ENCODE measurements at regions of chr7 and their contacts with region 1.

Region 1: DNA sequence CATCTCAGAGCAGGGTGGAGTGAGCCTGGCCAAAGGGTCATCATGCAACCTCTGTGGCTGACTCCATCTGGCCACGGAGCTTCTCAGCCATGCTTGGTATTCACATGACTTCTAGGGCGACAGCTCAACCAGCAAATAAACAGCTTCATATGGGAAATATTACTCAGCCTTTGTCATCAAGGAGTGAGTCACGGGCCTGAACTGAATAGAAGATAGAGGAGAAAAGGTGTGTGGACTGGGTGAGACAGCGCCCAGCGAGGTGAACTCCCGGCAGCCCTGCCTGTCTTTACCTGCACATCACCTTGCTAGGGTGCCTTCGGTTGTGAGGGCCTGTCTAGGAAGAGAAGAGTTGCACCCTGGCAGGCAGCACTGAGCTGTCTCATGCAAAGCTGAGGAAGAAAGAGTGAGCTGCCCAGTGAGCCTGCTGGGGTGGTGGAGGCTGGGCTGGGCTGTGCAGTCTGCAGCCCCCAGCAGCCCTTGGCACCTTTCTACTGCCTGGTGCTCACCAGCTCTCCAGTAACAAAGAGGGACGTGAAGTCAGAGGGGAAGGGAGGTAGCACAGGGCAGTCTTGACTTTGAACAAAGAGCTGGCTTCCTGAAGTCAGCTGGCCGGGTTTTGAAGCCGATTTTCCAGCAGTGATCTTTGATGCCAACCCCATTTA is 114.2 kb downstream of the EGFR start:
- DNase-seq: peak; percentile 63
- ATAC-seq: peak; percentile 82
- H3K4me3 Mint-ChIP-seq: no peak overlapping the region
- H3K27ac Mint-ChIP-seq: peak overlapping the region; percentile 72
- H3K4me1 Mint-ChIP-seq: peaks cover 38% of the 10 kb centered on the region
- H3K27me3 Mint-ChIP-seq: peaks cover 16% of the 10 kb centered on the region

Region 2: DNA sequence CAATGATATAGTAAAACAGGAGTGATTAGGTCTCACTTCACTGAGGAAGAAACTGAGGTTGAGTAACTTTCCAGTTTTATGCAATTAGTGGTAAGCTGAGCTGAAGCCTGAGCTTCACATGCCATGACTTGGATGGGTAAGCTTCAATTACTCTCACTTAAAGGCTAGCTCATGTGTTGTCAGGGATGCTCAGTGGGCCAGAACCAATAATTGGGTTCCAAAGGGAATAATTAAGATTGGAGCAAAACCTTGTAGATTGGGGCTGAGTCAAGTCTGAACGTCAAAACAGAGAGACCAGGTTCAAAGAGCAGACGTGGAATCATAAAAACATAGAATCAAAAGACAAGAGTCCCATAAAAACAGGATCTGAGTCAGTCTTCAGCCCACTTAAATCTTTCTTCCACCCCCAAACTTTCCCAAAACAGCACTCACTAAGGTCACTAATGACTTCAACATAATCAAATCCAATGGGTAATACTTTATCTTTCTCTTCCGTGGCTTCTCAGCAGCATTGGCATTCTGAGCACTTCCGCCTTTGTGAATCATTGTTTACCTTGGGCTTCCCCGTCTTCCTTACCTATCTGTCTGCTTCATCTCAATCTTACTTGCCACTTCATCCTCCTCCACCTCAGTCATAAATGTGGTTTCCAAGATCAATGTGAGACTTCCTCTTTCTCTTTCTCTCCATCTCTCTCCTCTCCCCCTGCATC is 137.2 kb before region 1 on chr7:
- CTCF ChIA-PET with region 1: no interaction called
- POLR2A ChIA-PET with region 1: interaction called, 3 read pairs
- intact Hi-C with region 1: loop called (anchors 2 to 5 kb)
- DNase-seq: peak; percentile 58
- ATAC-seq: peak; percentile 90
- H3K4me3 Mint-ChIP-seq: no peak overlapping the region
- H3K27ac Mint-ChIP-seq: peak overlapping the region; percentile 69
- H3K4me1 Mint-ChIP-seq: peaks cover 34% of the 10 kb centered on the region
- H3K27me3 Mint-ChIP-seq: peaks cover 22% of the 10 kb centered on the region

Region 3: GRCh38 chr7:55073945-55074499 is 59.0 kb before region 1 on chr7:
- CTCF ChIA-PET with region 1: no interaction called
- POLR2A ChIA-PET with region 1: no interaction called
- intact Hi-C with region 1: loop called in 1 of 2 experiments (anchors 2 kb)
- DNase-seq: peak; percentile 50
- ATAC-seq: peak; percentile 77
- H3K4me3 Mint-ChIP-seq: no peak overlapping the region
- H3K27ac Mint-ChIP-seq: peak overlapping the region; percentile 33
- H3K4me1 Mint-ChIP-seq: peaks cover 18% of the 10 kb centered on the region
- H3K27me3 Mint-ChIP-seq: peaks cover 8% of the 10 kb centered on the region

Region 4: DNA sequence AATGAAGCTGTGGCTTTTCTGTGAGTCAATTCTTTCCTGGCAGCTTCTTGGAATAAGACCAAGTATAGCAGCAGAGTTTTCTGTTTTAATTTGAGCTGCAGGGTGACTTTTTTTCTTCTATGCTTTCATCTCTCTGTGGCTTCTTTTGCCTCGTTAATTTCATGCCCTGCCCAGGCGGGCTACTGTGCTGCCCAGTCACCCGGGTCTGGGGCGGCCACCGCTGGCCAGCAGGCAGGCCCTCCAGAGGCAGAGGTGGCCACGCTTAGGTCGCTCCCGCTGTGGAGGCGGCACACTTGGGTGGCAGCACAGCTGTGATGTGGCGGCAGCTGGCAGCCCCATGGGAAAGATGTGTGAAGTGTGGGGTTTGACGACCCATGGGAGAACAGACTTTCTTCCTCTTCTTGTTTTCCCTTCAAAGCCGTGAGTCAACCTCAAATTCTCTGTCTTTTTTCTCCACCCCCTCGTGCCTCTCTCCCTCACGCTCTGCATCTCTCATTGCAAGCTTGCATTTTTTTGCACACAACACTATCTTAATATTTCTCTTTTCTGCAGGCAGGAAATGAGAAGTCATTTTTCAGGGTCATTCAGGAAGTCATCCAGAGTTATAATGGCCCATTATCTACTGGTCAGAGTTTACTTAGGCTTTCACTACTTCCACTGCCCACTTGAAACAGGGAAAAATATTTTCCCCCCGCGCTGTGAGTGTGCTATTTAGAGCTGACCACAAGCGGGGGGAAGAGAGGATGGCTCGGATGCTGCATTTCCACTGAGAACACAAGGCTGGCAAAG is 46.4 kb before region 1 on chr7:
- CTCF ChIA-PET with region 1: no interaction called
- POLR2A ChIA-PET with region 1: no interaction called
- intact Hi-C with region 1: loop called (anchors 2 to 5 kb)
- DNase-seq: peak; percentile 45
- ATAC-seq: peak; percentile 79
- H3K4me3 Mint-ChIP-seq: no peak overlapping the region
- H3K27ac Mint-ChIP-seq: peak overlapping the region; percentile 29
- H3K4me1 Mint-ChIP-seq: peaks cover 15% of the 10 kb centered on the region
- H3K27me3 Mint-ChIP-seq: peaks cover 24% of the 10 kb centered on the region

Region 5: DNA sequence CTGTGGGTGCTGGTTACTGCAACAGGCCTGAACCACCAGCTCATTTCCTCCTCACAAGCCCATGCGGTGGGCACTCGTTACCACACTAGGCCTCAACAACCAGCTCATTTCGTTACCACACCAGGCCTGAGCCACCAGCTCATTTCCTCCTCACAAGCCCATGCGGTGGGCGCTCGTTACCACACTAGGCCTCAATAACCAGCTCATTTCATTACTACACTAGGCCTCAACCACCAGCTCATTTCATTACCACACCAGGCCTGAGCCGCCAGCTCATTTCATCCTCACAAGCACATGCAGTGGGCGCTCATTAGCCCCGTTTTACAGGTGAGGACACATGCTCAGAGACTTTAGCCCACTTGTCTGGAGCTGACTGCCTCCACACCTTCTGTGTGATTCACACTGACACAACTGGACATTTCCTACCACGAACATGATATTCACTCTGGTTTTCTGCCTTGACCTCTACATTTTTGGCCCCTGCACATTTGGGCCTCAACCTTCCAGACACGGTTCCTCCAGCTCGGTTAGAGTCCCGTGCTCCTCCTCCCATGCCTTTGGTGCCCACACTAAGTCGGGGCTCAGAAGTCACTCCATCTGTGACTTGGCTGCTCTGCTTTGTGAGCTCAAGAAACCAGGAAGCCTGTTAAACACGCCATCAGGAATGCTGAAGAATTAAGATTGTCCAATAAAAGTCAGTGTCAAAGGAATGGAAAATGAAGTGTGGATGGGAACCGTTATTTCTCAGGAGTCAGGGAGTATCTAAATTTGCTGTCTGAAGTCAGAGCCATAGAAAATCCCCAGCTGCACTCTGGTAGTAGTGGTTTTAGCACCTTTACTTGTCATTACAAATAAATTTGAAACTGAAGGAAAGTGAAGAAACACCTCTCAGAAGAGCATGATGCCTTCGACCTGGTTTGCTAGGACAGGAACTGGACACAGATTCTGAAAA is 176.3 kb after region 1 on chr7:
- CTCF ChIA-PET with region 1: no interaction called
- POLR2A ChIA-PET with region 1: interaction called, 3 read pairs
- intact Hi-C with region 1: loop called in 1 of 2 experiments (anchors 5 kb)
- DNase-seq: peak; percentile 91
- ATAC-seq: peak; percentile 88
- H3K4me3 Mint-ChIP-seq: no peak overlapping the region
- H3K27ac Mint-ChIP-seq: peak overlapping the region; percentile 84
- H3K4me1 Mint-ChIP-seq: peaks cover 22% of the 10 kb centered on the region
- H3K27me3 Mint-ChIP-seq: peaks cover 12% of the 10 kb centered on the region

Region 6: GRCh38 chr7:55515569-55516279 is 382.7 kb after region 1 on chr7:
- CTCF ChIA-PET with region 1: no interaction called
- POLR2A ChIA-PET with region 1: no interaction called
- intact Hi-C with region 1: loop called in 1 of 2 experiments (anchors 5 kb)
- DNase-seq: peak; percentile 50
- ATAC-seq: peak; percentile 25
- H3K4me3 Mint-ChIP-seq: peak overlapping the region; percentile 2
- H3K27ac Mint-ChIP-seq: peak overlapping the region; percentile 69
- H3K4me1 Mint-ChIP-seq: peaks cover 66% of the 10 kb centered on the region
- H3K27me3 Mint-ChIP-seq: no peaks in the 10 kb centered on the region

Measured in activated CD4-positive, alpha-beta T cell treated with anti-CD3 and anti-CD28 coated beads for 36 hours (primary cell).